ENCODE measurements at regions of chr15 and their contacts with region 1.

Region 1: GRCh38 chr15:98954411-98954810 is 53.2 kb downstream of the PGPEP1L start:
- DNase-seq: peak; percentile 85 to 92 (median 88)
- ATAC-seq: peak; percentile 77 to 81
- H3K4me3 ChIP-seq: no peak overlapping the region
- H3K27ac ChIP-seq: peak overlapping the region; percentile 84
- H3K4me1 ChIP-seq: peaks cover 8% of the 10 kb centered on the region
- H3K27me3 ChIP-seq: no peaks in the 10 kb centered on the region

Region 2: GRCh38 chr15:99059010-99059981 is 104.9 kb after region 1 on chr15:
- intact Hi-C with region 1: loop called in 1 of 4 experiments (anchors 10 kb)
- DNase-seq: peak; percentile 88 to 93 (median 92)
- ATAC-seq: peak; percentile 90 to 93
- H3K4me3 ChIP-seq: peak overlapping the region; percentile 58
- H3K27ac ChIP-seq: peak overlapping the region; percentile 68
- H3K4me1 ChIP-seq: peaks cover 2% of the 10 kb centered on the region
- H3K27me3 ChIP-seq: no peaks in the 10 kb centered on the region